Ascending aorta (tissue), 2 donors: ENCODE measurements at regions of chr1 and their contacts with region 1.

Region 1: GRCh38 chr1:98468111-98468717 is 193.3 kb upstream of the SNX7 start:
- DNase-seq: no peak
- H3K4me3 ChIP-seq: no peak overlapping the region
- H3K27ac ChIP-seq: no peak overlapping the region
- H3K4me1 ChIP-seq: no peaks in the 10 kb centered on the region
- H3K27me3 ChIP-seq: no peaks in the 10 kb centered on the region
- CTCF ChIP-seq: peak; percentile 53 to 86 (median 78)

Region 2: GRCh38 chr1:98001764-98002163 is 466.4 kb before region 1 on chr1:
- intact Hi-C with region 1: loop called (anchors 10 kb)
- DNase-seq: no peak
- H3K4me3 ChIP-seq: no peak overlapping the region
- H3K27ac ChIP-seq: no peak overlapping the region
- H3K4me1 ChIP-seq: no peaks in the 10 kb centered on the region
- H3K27me3 ChIP-seq: no peaks in the 10 kb centered on the region
- CTCF ChIP-seq: peak in 1 of 3 experiments; percentile 17

Region 3: GRCh38 chr1:98429965-98430443 is 38.2 kb before region 1 on chr1:
- intact Hi-C with region 1: no loop called
- DNase-seq: no peak
- H3K4me3 ChIP-seq: no peak overlapping the region
- H3K27ac ChIP-seq: no peak overlapping the region
- H3K4me1 ChIP-seq: no peaks in the 10 kb centered on the region
- H3K27me3 ChIP-seq: no peaks in the 10 kb centered on the region
- CTCF ChIP-seq: no peak

Region 4: DNA sequence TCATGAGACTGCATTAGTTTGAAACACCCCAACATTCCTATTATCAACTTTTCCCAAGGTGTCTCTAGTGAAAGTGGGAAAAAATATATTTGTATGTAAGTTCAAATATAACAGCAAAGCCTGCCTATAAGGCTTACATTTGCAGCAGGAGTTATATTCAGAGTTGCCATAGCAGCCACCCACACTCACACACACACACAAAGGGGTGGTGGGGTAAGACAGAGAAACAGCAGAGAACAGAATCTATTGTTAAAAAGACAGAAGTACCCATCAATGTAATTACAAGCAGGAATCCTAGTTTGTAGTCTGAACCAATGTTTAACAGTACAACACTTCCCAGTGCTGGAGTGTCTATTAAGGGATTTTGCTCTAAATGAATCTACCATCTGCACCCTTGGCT is 481.4 kb after region 1 on chr1:
- intact Hi-C with region 1: no loop called
- DNase-seq: no peak
- H3K4me3 ChIP-seq: no peak overlapping the region
- H3K27ac ChIP-seq: no peak overlapping the region
- H3K4me1 ChIP-seq: no peaks in the 10 kb centered on the region
- H3K27me3 ChIP-seq: no peaks in the 10 kb centered on the region
- CTCF ChIP-seq: no peak